Upper lobe of right lung (tissue), 1 donor: ENCODE measurements at regions of chr6 and their contacts with region 1.

Region 1: GRCh38 chr6:26571592-26572296 is 25.0 kb upstream of the ABT1 start:
- DNase-seq: no peak
- ATAC-seq: peak; percentile 70
- H3K4me3 ChIP-seq: peak overlapping the region; percentile 55
- H3K27ac ChIP-seq: peak overlapping the region; percentile 75
- H3K4me1 ChIP-seq: no peaks in the 10 kb centered on the region
- H3K27me3 ChIP-seq: peaks cover 13% of the 10 kb centered on the region
- CTCF ChIP-seq: no peak

Region 2: GRCh38 chr6:26329763-26330511 is 241.8 kb before region 1 on chr6:
- intact Hi-C with region 1: loop called (anchors 10 kb)
- DNase-seq: no peak
- ATAC-seq: no peak
- H3K4me3 ChIP-seq: no peak overlapping the region
- H3K27ac ChIP-seq: no peak overlapping the region
- H3K4me1 ChIP-seq: peaks cover 3% of the 10 kb centered on the region
- H3K27me3 ChIP-seq: peaks cover 76% of the 10 kb centered on the region
- CTCF ChIP-seq: no peak

Region 3: GRCh38 chr6:26394289-26394688 is 177.5 kb before region 1 on chr6:
- intact Hi-C with region 1: no loop called
- DNase-seq: no peak
- ATAC-seq: no peak
- H3K4me3 ChIP-seq: no peak overlapping the region
- H3K27ac ChIP-seq: no peak overlapping the region
- H3K4me1 ChIP-seq: no peaks in the 10 kb centered on the region
- H3K27me3 ChIP-seq: no peaks in the 10 kb centered on the region
- CTCF ChIP-seq: no peak